Activated B cell treated with CpG ODN at 0.5 μM for 24 hours (primary cell): ENCODE measurements at regions of chr3 and their contacts with region 1.

Region 1: GRCh38 chr3:169764452-169765274 is at the start of gene TERC:
- DNase-seq: peak; percentile 78
- ATAC-seq: peak; percentile 79
- H3K4me3 Mint-ChIP-seq: peak within 1 kb of the TSS; percentile 96
- H3K27ac Mint-ChIP-seq: peak within 1 kb of the TSS; percentile 99
- H3K4me1 Mint-ChIP-seq: peaks cover 25% of the 10 kb centered on the region
- H3K27me3 Mint-ChIP-seq: no peaks in the 10 kb centered on the region
- CTCF ChIP-seq: no peak
- total RNA-seq, gene TERC: 2.5 and 8.4 TPM in 2 replicates

Region 2: GRCh38 chr3:168707900-168708299 is 1056.8 kb before region 1 on chr3:
- CTCF ChIA-PET with region 1: no interaction called
- POLR2A ChIA-PET with region 1: no interaction called
- intact Hi-C with region 1: no loop called
- DNase-seq: no peak
- ATAC-seq: no peak
- H3K4me3 Mint-ChIP-seq: no peak overlapping the region
- H3K27ac Mint-ChIP-seq: no peak overlapping the region
- H3K4me1 Mint-ChIP-seq: no peaks in the 10 kb centered on the region
- H3K27me3 Mint-ChIP-seq: no peaks in the 10 kb centered on the region
- CTCF ChIP-seq: no peak

Region 3: GRCh38 chr3:169846458-169847193 is 82.0 kb after region 1 on chr3:
- CTCF ChIA-PET with region 1: no interaction called
- POLR2A ChIA-PET with region 1: interaction called, 11 read pairs
- intact Hi-C with region 1: no loop called
- DNase-seq: no peak
- ATAC-seq: peak; percentile 95
- H3K4me3 Mint-ChIP-seq: peak overlapping the region; percentile 67
- H3K27ac Mint-ChIP-seq: peak overlapping the region; percentile 92
- H3K4me1 Mint-ChIP-seq: peaks cover 57% of the 10 kb centered on the region
- H3K27me3 Mint-ChIP-seq: no peaks in the 10 kb centered on the region
- CTCF ChIP-seq: no peak

Region 4: DNA sequence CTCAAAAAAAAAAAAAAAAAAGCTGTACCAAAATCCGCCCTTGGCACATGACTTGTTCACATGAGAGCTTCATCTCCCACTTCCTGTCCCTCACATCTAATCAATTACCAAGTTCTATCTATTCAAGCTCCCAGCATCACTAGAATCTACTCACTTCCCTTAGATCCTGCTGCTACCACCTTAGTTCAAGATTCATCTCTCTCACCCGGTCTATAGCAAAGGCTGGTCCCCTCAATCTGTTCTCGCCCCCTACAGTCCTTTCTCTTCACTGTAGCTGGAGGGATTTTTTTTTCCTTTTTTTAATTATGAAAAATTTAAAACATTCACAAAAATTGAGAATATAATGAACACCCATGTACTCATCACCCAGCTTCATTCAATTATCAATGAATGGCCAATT is 256.4 kb after region 1 on chr3:
- CTCF ChIA-PET with region 1: interaction called, 4 read pairs
- POLR2A ChIA-PET with region 1: interaction called, 12 read pairs
- intact Hi-C with region 1: no loop called
- DNase-seq: no peak
- ATAC-seq: peak; percentile 70
- H3K4me3 Mint-ChIP-seq: no peak overlapping the region
- H3K27ac Mint-ChIP-seq: no peak overlapping the region
- H3K4me1 Mint-ChIP-seq: peaks cover 5% of the 10 kb centered on the region
- H3K27me3 Mint-ChIP-seq: peaks cover 4% of the 10 kb centered on the region
- CTCF ChIP-seq: no peak

Region 5: GRCh38 chr3:170180908-170181879 is 416.5 kb after region 1 on chr3 and contains the start of gene PHC3:
- CTCF ChIA-PET with region 1: interaction called, 3 read pairs
- POLR2A ChIA-PET with region 1: interaction called, 10 read pairs
- intact Hi-C with region 1: loop called (anchors 1 kb)
- DNase-seq: peak; percentile 92
- ATAC-seq: peak; percentile 80
- H3K4me3 Mint-ChIP-seq: peak within 1 kb of the TSS; percentile 96
- H3K27ac Mint-ChIP-seq: peak within 1 kb of the TSS; percentile 98
- H3K4me1 Mint-ChIP-seq: peaks cover 32% of the 10 kb centered on the region
- H3K27me3 Mint-ChIP-seq: no peaks in the 10 kb centered on the region
- CTCF ChIP-seq: no peak
- total RNA-seq, gene PHC3: 105 TPM in 2 replicates

Region 6: DNA sequence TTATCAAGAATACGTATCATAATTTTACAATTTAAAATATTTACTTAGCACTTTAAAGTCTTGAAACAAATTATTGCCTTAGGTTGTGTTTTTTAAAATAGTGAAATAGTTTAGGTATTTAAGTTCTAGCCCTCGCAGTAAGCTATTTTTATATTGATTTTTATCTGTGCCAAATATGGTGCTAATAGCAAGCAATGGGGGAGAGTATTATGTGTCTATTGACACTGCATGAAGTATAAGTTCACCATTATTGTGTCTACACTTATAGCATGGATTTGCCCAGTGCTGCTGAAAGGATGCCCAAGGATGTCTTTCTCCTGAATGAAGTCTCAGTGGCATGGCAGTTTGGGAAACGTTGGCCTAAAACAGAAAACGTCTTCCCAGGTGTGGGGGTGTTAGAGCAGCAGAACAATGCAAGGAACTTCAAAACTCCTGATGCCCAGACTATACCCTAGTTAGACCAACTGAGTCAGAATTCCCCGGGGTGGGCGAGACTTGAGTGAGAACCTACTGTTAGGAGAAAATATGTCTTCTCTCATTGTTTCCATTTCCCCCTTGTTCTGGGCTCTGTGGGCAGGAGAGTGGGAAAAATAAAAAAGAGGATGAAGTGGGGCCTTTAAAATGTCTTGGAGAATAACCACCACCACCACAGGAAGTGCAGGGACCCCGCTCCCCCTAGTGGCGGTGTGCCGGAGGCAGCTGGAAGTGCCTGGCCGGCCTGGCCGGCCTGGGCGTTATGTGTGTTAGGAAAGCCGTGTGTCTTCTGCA is 925.4 kb after region 1 on chr3:
- CTCF ChIA-PET with region 1: no interaction called
- POLR2A ChIA-PET with region 1: no interaction called
- intact Hi-C with region 1: loop called (anchors 5 kb)
- DNase-seq: peak; percentile 28
- ATAC-seq: peak; percentile 54
- H3K4me3 Mint-ChIP-seq: no peak overlapping the region
- H3K27ac Mint-ChIP-seq: no peak overlapping the region
- H3K4me1 Mint-ChIP-seq: no peaks in the 10 kb centered on the region
- H3K27me3 Mint-ChIP-seq: peaks cover 3% of the 10 kb centered on the region
- CTCF ChIP-seq: no peak